ENCODE measurements at regions of chr3 and their contacts with region 1.

Region 1: DNA sequence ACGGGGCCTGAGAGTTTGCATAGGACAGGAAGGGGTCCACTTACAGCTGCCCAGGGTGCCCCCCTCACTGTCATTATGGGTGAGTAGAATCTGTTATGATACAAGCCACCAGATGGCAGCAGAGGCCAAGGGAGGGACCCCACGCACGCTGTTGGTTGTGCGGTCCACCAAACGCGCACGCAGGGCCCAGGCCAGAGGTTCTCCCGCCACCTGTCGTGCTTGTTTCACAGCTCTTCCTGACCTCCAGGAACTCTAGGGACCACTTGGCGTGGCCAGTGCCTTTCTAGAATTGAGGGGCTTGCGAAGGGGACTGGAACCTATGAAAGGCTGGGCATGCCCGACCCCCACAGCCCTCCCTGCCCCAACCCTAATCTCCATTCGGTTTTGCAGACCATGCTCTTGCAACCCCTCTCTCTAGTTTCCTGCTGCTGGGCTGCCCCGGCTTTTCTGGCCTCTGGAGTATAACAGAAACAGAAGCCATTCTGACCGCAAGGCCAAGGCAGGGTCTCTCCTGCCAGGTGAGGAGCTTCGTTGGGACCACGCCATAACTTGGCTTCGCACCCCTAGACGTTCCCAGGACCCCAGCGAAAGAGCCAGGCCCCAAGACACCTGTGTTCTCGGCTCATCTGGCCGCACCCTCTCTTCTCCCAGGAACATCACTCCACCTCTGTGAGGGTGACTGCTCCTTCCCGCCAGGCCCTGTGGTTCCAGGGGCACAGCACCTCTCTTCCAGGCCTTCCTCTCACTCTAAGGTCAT is 46.0 kb downstream of the ALDH1L1 start:
- H3K4me3 ChIP-seq: no peak overlapping the region
- H3K27ac ChIP-seq: no peak overlapping the region
- H3K4me1 ChIP-seq: no peaks in the 10 kb centered on the region
- CTCF ChIP-seq: peak; percentile 66

Region 2: GRCh38 chr3:126197854-126198584 is 63.6 kb after region 1 on chr3:
- CTCF ChIA-PET with region 1: interaction called, 39 read pairs
- POLR2A ChIA-PET with region 1: no interaction called
- H3K4me3 ChIP-seq: no peak overlapping the region
- H3K27ac ChIP-seq: no peak overlapping the region
- H3K4me1 ChIP-seq: no peaks in the 10 kb centered on the region
- CTCF ChIP-seq: no peak

Region 3: DNA sequence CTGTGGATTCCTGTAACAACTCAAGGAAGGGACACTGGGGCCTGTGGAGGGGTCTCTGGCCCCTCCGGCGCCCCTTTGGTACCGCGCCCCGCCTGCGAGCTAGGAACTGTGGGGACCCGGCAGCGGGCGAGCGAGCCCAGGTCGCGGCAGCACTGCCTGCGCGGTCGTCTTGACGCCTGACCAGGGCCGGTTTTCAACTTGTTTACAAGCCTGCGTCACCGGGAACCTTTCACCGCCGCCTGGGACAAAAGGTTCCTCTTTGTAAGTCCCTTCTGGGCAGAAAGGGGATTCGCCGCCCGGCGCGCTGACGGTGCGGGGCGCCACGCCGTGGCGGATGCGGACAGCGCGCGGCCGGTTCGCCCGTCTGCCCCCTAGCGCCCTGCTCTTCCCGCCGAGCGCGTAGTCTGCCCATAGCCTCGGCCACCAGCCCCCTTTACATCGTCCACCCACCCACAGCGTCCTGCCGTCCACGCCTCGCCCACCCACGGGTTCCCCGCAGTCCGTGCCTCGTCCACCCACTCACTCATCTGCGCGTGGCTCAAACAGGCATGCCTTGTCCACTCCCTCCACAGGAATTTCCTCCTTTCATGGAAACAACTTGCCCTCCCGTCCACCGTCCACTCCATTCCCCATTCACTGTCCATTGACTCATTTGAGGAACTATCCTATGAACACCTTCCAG is 254.9 kb after region 1 on chr3:
- CTCF ChIA-PET with region 1: interaction called, 14 read pairs
- POLR2A ChIA-PET with region 1: no interaction called
- H3K4me3 ChIP-seq: peak overlapping the region; percentile 4; the same call in 1 of the 2 replicates
- H3K27ac ChIP-seq: no peak overlapping the region
- H3K4me1 ChIP-seq: no peaks in the 10 kb centered on the region
- CTCF ChIP-seq: peak; percentile 99

Measured in HEK293 (cell line).